ENCODE measurements at regions of chr5 and their contacts with region 1.

Region 1: DNA sequence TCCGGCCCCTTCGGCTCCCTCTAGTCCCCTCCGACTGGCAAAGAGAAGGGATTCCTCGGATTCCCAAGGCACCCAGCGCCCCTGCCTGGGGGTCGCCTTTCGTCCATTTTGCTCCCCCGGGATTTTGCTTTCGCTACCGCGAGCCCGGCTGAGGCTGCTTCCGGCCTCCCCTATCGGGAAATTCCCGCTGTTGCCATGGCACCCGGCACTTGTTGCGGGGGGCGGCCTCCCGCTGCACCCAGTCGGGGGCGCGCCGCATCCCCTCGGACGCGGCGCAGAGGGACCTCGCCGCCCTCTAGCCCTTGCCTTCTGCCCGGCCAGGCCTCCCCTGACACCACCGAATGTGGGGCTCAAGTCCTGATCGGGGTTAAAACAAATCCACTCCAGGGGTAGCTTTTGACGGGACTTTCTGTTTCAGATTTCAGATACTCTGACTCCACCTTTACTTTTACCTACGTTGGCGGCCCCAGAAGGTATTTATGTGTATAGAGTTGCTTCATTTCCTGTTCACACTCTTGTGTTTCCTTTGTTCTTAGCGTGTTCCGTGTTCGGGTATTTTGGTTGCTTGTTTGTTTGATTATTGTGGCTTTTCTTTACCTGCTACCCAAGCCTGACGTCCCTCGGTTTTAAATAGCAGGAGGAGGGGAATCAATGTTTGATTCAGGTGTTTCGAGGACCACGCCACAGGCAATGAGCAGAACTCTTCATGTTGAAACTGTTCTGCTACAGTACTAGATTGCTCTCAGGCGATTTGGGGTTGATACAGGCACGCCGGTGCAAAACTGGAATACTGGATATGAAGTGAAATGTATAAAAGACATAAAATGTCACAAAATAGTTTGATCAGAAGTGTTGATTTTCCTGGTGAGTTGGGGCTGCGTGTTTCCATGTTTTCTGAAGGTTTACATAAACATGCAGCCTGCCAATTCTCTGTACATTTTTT is 1.5 kb downstream of the PARP8 start:
- DNase-seq: peak; percentile 55
- ATAC-seq: peak; percentile 84
- H3K4me3 ChIP-seq: peak overlapping the region; percentile 81
- H3K27ac ChIP-seq: peak overlapping the region; percentile 91
- H3K4me1 ChIP-seq: peaks cover 4% of the 10 kb centered on the region; the same call in 1 of the 2 replicates
- H3K27me3 ChIP-seq: no peaks in the 10 kb centered on the region
- CTCF ChIP-seq: no peak
- EP300 ChIP-seq: no peak
- POLR2A ChIP-seq: peak; percentile 79
- RAD21 ChIP-seq: no peak; the same call in 1 of the 2 replicates

Region 2: GRCh38 chr5:50435168-50435567 is 232.8 kb before region 1 on chr5:
- CTCF ChIA-PET with region 1: no interaction called
- POLR2A ChIA-PET with region 1: no interaction called
- RAD21 ChIA-PET with region 1: no interaction called
- SMC1A ChIA-PET with region 1: no interaction called
- in situ Hi-C with region 1: loop called (anchors 10 kb)
- intact Hi-C with region 1: no loop called
- DNase-seq: no peak
- ATAC-seq: peak; percentile 64
- H3K4me3 ChIP-seq: no peak overlapping the region
- H3K27ac ChIP-seq: no peak overlapping the region
- H3K4me1 ChIP-seq: no peaks in the 10 kb centered on the region
- H3K27me3 ChIP-seq: no peaks in the 10 kb centered on the region
- CTCF ChIP-seq: no peak
- EP300 ChIP-seq: no peak
- POLR2A ChIP-seq: no peak
- RAD21 ChIP-seq: no peak

Region 3: DNA sequence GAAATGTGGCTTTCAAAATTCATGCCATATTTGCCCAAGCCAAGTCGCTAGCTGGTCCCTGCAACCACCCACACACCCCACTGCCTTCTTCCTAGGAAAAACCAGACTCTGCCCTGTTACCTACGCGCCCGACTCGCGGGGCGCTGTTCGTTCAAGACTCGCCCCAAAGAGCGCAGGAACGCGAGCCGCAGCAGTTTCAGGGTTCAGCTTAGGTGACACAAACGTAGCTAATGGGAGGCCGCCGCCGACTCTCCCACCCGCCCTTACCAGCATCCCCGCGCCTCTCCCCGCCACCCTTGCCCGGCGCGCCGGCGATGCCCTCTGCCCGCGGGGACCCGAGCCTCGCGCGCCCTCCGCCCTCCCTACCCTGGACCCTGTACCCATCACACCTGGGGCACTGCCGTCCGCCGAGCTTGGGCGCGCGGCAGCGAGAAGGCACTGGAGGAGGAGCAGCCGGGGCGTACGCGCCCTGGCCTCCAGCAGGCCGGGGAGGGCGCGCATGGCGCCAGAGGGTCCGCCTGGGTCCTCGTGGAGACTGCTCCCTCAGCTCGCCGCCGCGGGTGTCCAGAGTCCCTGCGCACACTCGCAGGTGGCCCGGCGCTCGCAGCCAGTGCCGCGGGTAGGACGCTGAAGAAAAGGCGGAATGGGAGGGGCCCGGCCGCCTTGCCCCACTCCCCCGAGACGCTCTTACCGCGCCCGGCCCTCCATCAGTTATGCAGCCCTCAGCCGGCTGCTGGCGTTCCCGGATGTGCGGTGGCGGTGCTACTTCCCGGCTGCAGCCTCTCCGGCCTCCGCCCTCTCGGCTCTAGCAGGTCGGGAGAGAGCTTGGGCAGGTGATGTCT is 227.1 kb before region 1 on chr5 and contains the start of gene EMB:
- CTCF ChIA-PET with region 1: no interaction called
- POLR2A ChIA-PET with region 1: interaction called, 3 read pairs
- RAD21 ChIA-PET with region 1: no interaction called
- SMC1A ChIA-PET with region 1: interaction called, 3 read pairs
- in situ Hi-C with region 1: loop called (anchors 10 kb)
- intact Hi-C with region 1: loop called (anchors 5 kb)
- DNase-seq: no peak
- ATAC-seq: peak; percentile 76
- H3K4me3 ChIP-seq: peak within 1 kb of the TSS; percentile 67
- H3K27ac ChIP-seq: peak within 1 kb of the TSS; percentile 14; the same call in 1 of the 2 replicates
- H3K4me1 ChIP-seq: peaks cover 7% of the 10 kb centered on the region; the same call in 1 of the 2 replicates
- H3K27me3 ChIP-seq: no peaks in the 10 kb centered on the region
- CTCF ChIP-seq: peak; percentile 41 to 55 (median 48)
- EP300 ChIP-seq: no peak
- POLR2A ChIP-seq: peak; percentile 74
- RAD21 ChIP-seq: peak; percentile 41
- polyA plus RNA-seq, gene EMB: 7.0 to 13.5 TPM

Region 4: GRCh38 chr5:50606179-50606578 is 61.7 kb before region 1 on chr5:
- CTCF ChIA-PET with region 1: no interaction called
- POLR2A ChIA-PET with region 1: no interaction called
- RAD21 ChIA-PET with region 1: no interaction called
- SMC1A ChIA-PET with region 1: no interaction called
- in situ Hi-C with region 1: no loop called
- intact Hi-C with region 1: loop called (anchors 5 kb)
- DNase-seq: peak; percentile 21
- ATAC-seq: peak; percentile 52
- H3K4me3 ChIP-seq: no peak overlapping the region
- H3K27ac ChIP-seq: no peak overlapping the region
- H3K4me1 ChIP-seq: no peaks in the 10 kb centered on the region
- H3K27me3 ChIP-seq: no peaks in the 10 kb centered on the region
- CTCF ChIP-seq: no peak
- EP300 ChIP-seq: peak; percentile 40 to 58; a peak in 2 of 4 replicates
- POLR2A ChIP-seq: no peak
- RAD21 ChIP-seq: no peak

Region 5: DNA sequence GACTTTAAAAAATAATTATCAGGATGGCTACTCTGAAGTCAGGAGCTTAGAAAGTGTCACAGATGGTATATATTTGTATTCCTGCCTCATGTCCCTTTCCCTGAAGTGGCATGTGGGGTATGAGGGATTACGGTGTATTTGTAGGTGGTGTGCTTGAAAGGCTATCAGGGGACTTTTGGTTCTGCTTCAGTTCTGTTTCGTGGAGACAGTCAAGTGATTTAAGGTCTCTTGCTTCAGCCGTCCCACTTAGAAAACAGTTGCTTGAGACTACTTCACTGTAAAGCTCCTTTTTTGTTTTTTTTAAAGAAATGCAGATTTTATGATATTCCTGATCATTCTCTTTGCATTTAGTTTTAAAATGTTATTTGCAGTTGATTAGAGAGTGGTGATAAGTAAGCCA is 16.8 kb after region 1 on chr5:
- CTCF ChIA-PET with region 1: interaction called, 3 read pairs
- POLR2A ChIA-PET with region 1: interaction called, 5 read pairs
- RAD21 ChIA-PET with region 1: interaction called, 8 read pairs
- SMC1A ChIA-PET with region 1: interaction called, 11 read pairs
- in situ Hi-C with region 1: no loop called
- intact Hi-C with region 1: no loop called
- DNase-seq: no peak
- ATAC-seq: peak; percentile 85
- H3K4me3 ChIP-seq: 0 out of 2 replicates have a peak overlapping the region, but pooled peaks have one; percentile 5
- H3K27ac ChIP-seq: peak overlapping the region; percentile 71
- H3K4me1 ChIP-seq: peaks cover 5% of the 10 kb centered on the region; the same call in 1 of the 2 replicates
- H3K27me3 ChIP-seq: no peaks in the 10 kb centered on the region
- CTCF ChIP-seq: no peak
- EP300 ChIP-seq: no peak
- POLR2A ChIP-seq: no peak
- RAD21 ChIP-seq: no peak

Region 6: GRCh38 chr5:50711273-50711672 is 43.3 kb after region 1 on chr5:
- CTCF ChIA-PET with region 1: no interaction called
- POLR2A ChIA-PET with region 1: interaction called, 6 read pairs
- RAD21 ChIA-PET with region 1: interaction called, 4 read pairs
- SMC1A ChIA-PET with region 1: interaction called, 4 read pairs
- in situ Hi-C with region 1: no loop called
- intact Hi-C with region 1: loop called (anchors 1 kb)
- DNase-seq: peak; percentile 87
- ATAC-seq: peak; percentile 95
- H3K4me3 ChIP-seq: peak overlapping the region; percentile 37
- H3K27ac ChIP-seq: peak overlapping the region; percentile 70
- H3K4me1 ChIP-seq: peaks cover 20% of the 10 kb centered on the region
- H3K27me3 ChIP-seq: no peaks in the 10 kb centered on the region
- CTCF ChIP-seq: no peak
- EP300 ChIP-seq: no peak; a peak in 1 of 4 replicates
- POLR2A ChIP-seq: no peak
- RAD21 ChIP-seq: no peak

Region 7: GRCh38 chr5:50751064-50751657 is 83.2 kb after region 1 on chr5:
- CTCF ChIA-PET with region 1: interaction called, 7 read pairs
- POLR2A ChIA-PET with region 1: interaction called, 6 read pairs
- RAD21 ChIA-PET with region 1: interaction called, 7 read pairs
- SMC1A ChIA-PET with region 1: interaction called, 8 read pairs
- in situ Hi-C with region 1: no loop called
- intact Hi-C with region 1: loop called (anchors 1 kb)
- DNase-seq: peak; percentile 27
- ATAC-seq: peak; percentile 97
- H3K4me3 ChIP-seq: no peak overlapping the region
- H3K27ac ChIP-seq: no peak overlapping the region
- H3K4me1 ChIP-seq: no peaks in the 10 kb centered on the region
- H3K27me3 ChIP-seq: no peaks in the 10 kb centered on the region
- CTCF ChIP-seq: peak; percentile 77 to 88 (median 78); a peak in 5 of 6 replicates
- EP300 ChIP-seq: no peak
- POLR2A ChIP-seq: no peak
- RAD21 ChIP-seq: peak; percentile 98